Left lung (tissue), 14 donors: ENCODE measurements at regions of chr1 and their contacts with region 1.

Region 1: DNA sequence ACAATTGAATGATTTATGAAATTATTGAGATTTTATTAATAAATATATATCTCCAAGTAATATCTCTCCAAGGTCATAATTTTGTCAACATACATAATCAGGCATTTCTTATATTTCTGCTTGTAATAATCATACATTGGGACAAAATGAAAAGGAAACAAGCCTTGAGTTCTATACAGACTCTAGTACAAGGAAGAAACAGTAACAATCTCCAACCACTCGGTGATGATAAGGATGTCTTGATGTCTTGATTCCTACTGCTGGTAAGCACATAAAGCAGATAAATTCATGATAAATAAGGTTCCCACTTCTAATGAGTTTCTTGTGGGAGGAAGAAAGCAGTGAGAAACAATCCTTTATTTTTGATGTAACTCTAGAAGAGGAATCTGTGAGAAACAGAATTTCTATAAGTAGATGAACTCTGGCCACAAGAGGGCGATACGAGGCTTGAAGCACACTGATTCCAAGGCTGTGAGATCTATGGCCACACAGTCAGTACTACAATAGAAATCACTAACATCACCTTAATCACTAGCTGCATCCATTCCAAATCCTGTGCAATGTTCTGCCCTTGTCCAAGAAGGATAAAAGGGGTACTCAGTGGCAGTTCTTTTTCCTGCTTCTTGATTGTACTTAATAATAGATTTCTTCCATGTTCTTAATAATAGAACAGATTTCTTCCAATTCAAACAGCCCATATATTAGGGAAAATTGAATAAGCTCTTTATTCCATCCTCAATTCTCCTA is 41.4 kb upstream of the LRRC8B start:
- DNase-seq: peak in 3 of 4 donors; percentile 63 to 79 (median 69)
- ATAC-seq: peak; percentile 92
- H3K4me3 ChIP-seq: no peak overlapping the region
- H3K27ac ChIP-seq: no peak overlapping the region
- H3K4me1 ChIP-seq: peaks cover 0 to 13% of the 10 kb centered on the region in 2 donors
- H3K27me3 ChIP-seq: no peaks in the 10 kb centered on the region
- CTCF ChIP-seq: peak; percentile 68 to 73

Region 2: DNA sequence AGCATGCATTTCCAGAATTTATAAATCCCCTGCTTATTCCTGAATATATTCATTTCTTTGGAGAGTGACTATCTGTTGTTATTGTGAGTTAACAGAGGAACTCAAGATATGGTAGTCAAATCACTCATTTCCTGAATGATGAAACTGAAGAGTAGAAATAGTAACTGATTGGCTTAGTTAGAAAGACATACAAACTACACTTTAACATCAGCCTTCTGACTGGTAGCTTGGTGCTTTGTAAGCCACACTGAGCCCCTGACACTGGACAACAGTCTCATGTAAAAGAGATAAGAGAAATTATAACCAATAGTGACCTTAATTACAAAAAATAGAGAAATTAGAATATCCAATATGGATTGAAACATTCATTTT is 312.1 kb before region 1 on chr1:
- intact Hi-C with region 1: no loop called
- DNase-seq: no peak
- ATAC-seq: no peak
- H3K4me3 ChIP-seq: no peak overlapping the region
- H3K27ac ChIP-seq: no peak overlapping the region
- H3K4me1 ChIP-seq: no peaks in the 10 kb centered on the region
- H3K27me3 ChIP-seq: no peaks in the 10 kb centered on the region
- CTCF ChIP-seq: no peak

Region 3: GRCh38 chr1:89603651-89604413 is 120.6 kb after region 1 on chr1:
- intact Hi-C with region 1: loop called in 1 of 2 experiments (anchors 5 kb)
- DNase-seq: no peak
- ATAC-seq: peak; percentile 15
- H3K4me3 ChIP-seq: no peak overlapping the region
- H3K27ac ChIP-seq: no peak overlapping the region
- H3K4me1 ChIP-seq: peaks cover 8 to 14% of the 10 kb centered on the region in 2 donors
- H3K27me3 ChIP-seq: no peaks in the 10 kb centered on the region
- CTCF ChIP-seq: no peak

Region 4: DNA sequence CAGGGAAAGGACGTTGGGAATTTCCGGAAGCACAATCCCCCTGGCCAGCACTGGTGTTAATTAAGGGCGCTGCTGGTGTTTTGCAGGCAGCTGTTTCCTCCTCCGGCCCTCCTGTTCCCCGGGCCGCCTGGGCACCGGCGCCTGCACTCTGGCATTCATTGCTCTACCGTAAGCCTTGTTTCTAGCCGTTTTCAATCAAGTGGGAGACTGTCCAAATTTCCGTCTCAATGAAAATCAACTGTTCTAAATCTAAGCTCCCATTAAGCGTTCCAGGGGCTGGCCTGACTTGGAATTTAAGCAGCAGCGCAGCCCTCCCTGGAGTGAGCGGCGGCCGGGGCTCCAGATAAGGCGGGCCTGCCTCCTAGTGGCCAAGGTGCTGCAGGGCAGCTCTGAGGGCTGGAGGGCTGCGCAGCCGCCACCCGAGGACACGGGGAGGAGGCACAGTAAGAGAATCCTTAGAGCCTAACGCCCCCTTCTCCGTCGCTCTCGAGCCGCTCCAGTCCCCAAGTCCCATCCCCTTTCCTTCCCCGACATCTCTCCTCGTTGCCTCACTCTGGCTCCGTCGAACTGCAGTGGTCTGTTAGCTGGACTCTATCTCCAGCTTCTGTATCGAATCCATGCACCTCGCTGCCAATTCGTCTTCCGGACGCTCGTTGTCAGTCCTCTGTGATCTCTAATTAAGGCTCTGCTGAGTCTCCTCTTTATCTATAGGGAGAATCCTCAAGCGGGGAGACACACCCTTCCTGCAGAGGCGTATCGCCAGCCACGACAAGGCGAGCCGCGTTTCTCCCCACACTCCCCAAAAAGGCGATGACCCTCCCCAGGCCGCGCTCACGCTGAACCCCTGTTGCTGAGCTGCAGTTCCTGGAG is 279.8 kb after region 1 on chr1:
- intact Hi-C with region 1: loop called in 1 of 2 experiments (anchors 10 kb)
- DNase-seq: peak; percentile 82 to 98 (median 90)
- ATAC-seq: peak; percentile 100
- H3K4me3 ChIP-seq: peak overlapping the region; percentile 28 to 38
- H3K27ac ChIP-seq: peak overlapping the region; percentile 14 to 61
- H3K4me1 ChIP-seq: peaks cover 8 to 55% of the 10 kb centered on the region in 2 donors
- H3K27me3 ChIP-seq: no peaks in the 10 kb centered on the region
- CTCF ChIP-seq: peak; percentile 98 to 99